IMR-90 (cell line): ENCODE measurements at regions of chr7 and their contacts with region 1.

Region 1: GRCh38 chr7:113159746-113160339 is 41.5 kb upstream of the SMIM30 start:
- DNase-seq: peak; percentile 45
- ATAC-seq: peak; percentile 75
- H3K4me3 ChIP-seq: no peak overlapping the region
- H3K27ac ChIP-seq: no peak overlapping the region
- H3K4me1 ChIP-seq: no peaks in the 10 kb centered on the region
- H3K27me3 ChIP-seq: no peaks in the 10 kb centered on the region
- CTCF ChIP-seq: peak; percentile 74
- POLR2A ChIP-seq: no peak
- RAD21 ChIP-seq: peak; percentile 71

Region 2: DNA sequence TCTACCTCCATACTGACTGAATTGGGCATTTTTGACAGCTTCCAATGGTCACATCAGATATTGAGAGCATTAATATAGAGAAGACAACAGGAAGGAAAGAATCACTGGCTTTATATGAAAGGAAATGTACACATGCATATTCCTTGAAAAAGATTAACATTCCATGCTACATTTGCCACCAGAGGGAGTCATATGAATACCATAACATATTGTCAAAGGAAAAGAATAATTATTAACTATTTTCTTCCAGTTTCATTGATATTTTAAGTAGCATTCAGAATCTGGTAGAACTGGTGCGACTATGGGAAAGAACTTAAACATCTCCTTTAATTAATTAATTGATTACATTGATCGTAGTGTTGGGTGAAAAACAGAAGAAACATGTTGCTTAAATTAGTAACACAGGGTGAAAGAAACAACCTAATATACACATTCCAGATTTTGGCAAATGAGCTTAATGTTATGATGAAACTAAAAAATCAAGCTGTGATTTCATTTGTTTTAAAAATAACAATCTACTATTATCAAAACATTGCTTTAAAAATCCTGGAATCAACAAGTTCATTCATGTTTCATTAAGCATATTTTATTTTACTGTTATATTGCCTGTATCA is 144.7 kb before region 1 on chr7:
- CTCF ChIA-PET with region 1: interaction called, 3 read pairs
- POLR2A ChIA-PET with region 1: no interaction called
- dilution Hi-C with region 1: no loop called
- in situ Hi-C with region 1: no loop called
- intact Hi-C with region 1: loop called (anchors 5 kb)
- DNase-seq: peak; percentile 60
- ATAC-seq: peak; percentile 53
- H3K4me3 ChIP-seq: no peak overlapping the region
- H3K27ac ChIP-seq: no peak overlapping the region
- H3K4me1 ChIP-seq: peaks cover 2% of the 10 kb centered on the region; the same call in 1 of the 2 replicates
- H3K27me3 ChIP-seq: no peaks in the 10 kb centered on the region
- CTCF ChIP-seq: peak; percentile 65
- POLR2A ChIP-seq: no peak
- RAD21 ChIP-seq: peak; percentile 72

Region 3: GRCh38 chr7:113040849-113041248 is 119.0 kb before region 1 on chr7:
- CTCF ChIA-PET with region 1: no interaction called
- POLR2A ChIA-PET with region 1: no interaction called
- dilution Hi-C with region 1: no loop called
- in situ Hi-C with region 1: no loop called
- intact Hi-C with region 1: no loop called
- DNase-seq: no peak
- ATAC-seq: no peak
- H3K4me3 ChIP-seq: no peak overlapping the region
- H3K27ac ChIP-seq: no peak overlapping the region
- H3K4me1 ChIP-seq: no peaks in the 10 kb centered on the region
- H3K27me3 ChIP-seq: peaks cover 1% of the 10 kb centered on the region; the same call in 1 of the 2 replicates
- CTCF ChIP-seq: no peak
- POLR2A ChIP-seq: no peak
- RAD21 ChIP-seq: no peak

Region 4: GRCh38 chr7:113142385-113143119 is 17.3 kb before region 1 on chr7:
- CTCF ChIA-PET with region 1: interaction called, 12 read pairs
- POLR2A ChIA-PET with region 1: no interaction called
- dilution Hi-C with region 1: no loop called
- in situ Hi-C with region 1: no loop called
- intact Hi-C with region 1: no loop called
- DNase-seq: no peak
- ATAC-seq: no peak
- H3K4me3 ChIP-seq: no peak overlapping the region
- H3K27ac ChIP-seq: no peak overlapping the region
- H3K4me1 ChIP-seq: no peaks in the 10 kb centered on the region
- H3K27me3 ChIP-seq: no peaks in the 10 kb centered on the region
- CTCF ChIP-seq: no peak
- POLR2A ChIP-seq: no peak
- RAD21 ChIP-seq: no peak

Region 5: DNA sequence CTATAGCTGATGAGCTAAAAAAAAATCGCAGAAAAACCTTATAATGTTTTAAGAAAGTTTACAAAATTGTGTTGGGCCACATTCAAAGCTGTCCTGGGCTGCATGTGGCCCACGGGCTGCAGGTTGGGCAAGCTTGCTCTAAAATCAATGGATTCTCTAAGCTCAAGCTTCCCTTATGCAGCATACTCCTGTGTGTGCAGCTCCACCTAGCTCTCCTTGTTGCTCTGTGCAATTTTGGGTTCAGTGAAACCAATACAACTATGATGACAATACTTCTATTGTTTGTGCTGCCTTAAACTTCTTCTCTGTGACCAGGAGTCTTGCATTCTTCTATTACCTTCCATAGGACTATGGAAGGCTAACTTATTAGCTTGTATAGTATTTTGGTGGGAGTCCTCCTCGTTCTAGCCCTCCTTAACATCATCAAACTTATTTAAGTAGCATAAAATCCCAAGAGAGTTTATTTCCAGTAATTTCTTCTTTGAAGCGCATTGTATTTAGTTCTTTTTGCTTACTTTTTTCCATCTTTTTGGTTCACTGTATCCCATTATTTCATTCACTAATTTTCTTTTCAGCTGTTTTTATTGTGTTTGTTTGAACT is 129.4 kb after region 1 on chr7:
- CTCF ChIA-PET with region 1: interaction called, 21 read pairs
- POLR2A ChIA-PET with region 1: no interaction called
- dilution Hi-C with region 1: no loop called
- in situ Hi-C with region 1: no loop called
- intact Hi-C with region 1: loop called (anchors 1 kb)
- DNase-seq: peak; percentile 71
- ATAC-seq: peak; percentile 95
- H3K4me3 ChIP-seq: no peak overlapping the region
- H3K27ac ChIP-seq: no peak overlapping the region
- H3K4me1 ChIP-seq: no peaks in the 10 kb centered on the region
- H3K27me3 ChIP-seq: no peaks in the 10 kb centered on the region
- CTCF ChIP-seq: peak; percentile 67
- POLR2A ChIP-seq: no peak
- RAD21 ChIP-seq: peak; percentile 78

Region 6: DNA sequence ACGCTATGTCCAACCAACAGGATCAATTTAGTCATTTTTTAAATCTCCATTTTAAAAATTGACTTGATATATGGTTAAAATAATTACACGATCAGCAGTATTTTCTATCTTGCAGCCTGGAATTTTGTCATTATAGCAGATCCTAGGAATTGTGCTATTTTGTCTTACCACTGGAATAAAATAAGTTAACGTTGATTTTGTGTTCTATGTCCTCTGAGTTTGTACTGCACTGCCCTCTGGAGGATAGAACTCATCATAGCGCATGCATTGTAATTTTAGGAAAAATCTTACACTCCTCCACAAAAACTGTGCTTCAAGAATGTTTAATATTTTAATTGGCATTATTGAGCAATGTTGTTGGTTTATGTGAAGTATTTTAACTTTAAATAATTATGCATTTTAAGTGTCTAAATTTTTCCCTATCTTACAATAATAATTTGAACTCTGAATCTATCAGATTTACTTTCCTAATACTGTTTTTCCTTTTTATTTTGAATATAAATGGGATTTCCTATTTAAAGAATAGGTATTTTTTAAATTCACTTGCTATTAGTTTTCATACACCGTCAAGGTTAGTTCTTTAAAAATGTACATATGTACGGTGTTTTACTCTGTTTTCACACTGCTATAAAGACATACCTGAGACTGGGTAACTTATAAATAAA is 538.8 kb after region 1 on chr7:
- CTCF ChIA-PET with region 1: no interaction called
- POLR2A ChIA-PET with region 1: no interaction called
- dilution Hi-C with region 1: no loop called
- in situ Hi-C with region 1: no loop called
- intact Hi-C with region 1: loop called (anchors 1 kb)
- DNase-seq: peak; percentile 39
- ATAC-seq: peak; percentile 70
- H3K4me3 ChIP-seq: no peak overlapping the region
- H3K27ac ChIP-seq: no peak overlapping the region
- H3K4me1 ChIP-seq: no peaks in the 10 kb centered on the region
- H3K27me3 ChIP-seq: no peaks in the 10 kb centered on the region
- CTCF ChIP-seq: peak; percentile 70
- POLR2A ChIP-seq: no peak
- RAD21 ChIP-seq: peak; percentile 56